Activated T-helper 2 cell treated with anti-CD3 and anti-CD28 coated beads, Interferon-gamma antibody, Interleukin-2, Interleukin-4, amounts not matched to agents 10 μg/mL and 5 μg/mL and 100 μg/mL, durations not matched to agents 14 hours and 24 hours and 36 hours (primary cell): ENCODE measurements at regions of chr12 and their contacts with region 1.

Region 1: DNA sequence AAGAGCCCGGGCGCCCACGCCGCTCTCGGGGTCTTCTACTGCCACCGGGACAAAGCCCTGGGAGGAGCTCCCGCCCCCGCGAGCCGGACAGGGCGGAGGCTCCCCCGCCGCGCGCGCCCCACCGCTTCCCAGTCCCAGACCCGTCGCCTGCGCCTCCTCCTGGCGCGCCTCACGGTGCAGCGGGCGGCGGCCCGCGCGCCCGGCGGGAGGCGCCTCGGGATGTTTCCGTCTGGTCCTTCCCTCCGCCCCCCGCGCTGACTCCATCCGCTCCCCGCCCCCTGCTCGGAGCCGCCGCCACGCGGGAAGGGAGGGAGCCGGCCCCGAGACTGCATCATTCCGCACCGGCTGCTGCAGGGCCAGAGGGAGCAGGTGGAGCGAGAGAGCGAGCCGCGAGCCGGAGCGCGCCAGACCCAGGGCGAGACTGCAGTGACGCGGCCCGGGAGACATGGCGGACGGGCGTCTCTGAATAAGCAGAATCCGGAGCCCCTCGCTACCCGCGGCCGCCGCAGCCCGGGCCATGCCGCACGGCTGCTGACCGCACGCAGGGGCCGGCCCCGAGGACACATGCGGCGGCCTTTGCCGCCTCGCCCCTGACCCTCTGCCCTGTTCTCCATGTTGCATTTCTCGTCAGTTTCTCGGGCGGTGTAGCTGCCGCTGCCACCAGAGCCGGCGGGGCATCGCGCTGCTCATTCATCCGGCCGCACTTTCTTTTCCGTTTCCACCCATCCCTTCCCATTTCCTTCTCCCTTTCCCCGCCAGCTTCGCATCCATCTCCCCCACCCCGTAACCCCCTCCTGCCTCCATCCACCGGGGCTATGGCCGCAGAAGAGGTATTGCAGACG is at the start of gene BICD1:
- DNase-seq: peak; percentile 65
- H3K4me3 Mint-ChIP-seq: peak within 1 kb of the TSS; percentile 91
- H3K27ac Mint-ChIP-seq: peak within 1 kb of the TSS; percentile 81
- H3K4me1 Mint-ChIP-seq: peaks cover 26% of the 10 kb centered on the region
- H3K27me3 Mint-ChIP-seq: peaks cover 16% of the 10 kb centered on the region
- total RNA-seq, gene BICD1: 8.0 and 8.8 TPM in 2 replicates

Region 2: GRCh38 chr12:31651893-31652521 is 454.7 kb before region 1 on chr12:
- intact Hi-C with region 1: loop called (anchors 2 kb)
- DNase-seq: no peak
- H3K4me3 Mint-ChIP-seq: no peak overlapping the region
- H3K27ac Mint-ChIP-seq: no peak overlapping the region
- H3K4me1 Mint-ChIP-seq: peaks cover 11% of the 10 kb centered on the region
- H3K27me3 Mint-ChIP-seq: peaks cover 4% of the 10 kb centered on the region

Region 3: GRCh38 chr12:32120419-32120818 is 13.7 kb after region 1 on chr12:
- intact Hi-C with region 1: loop called (anchors 1 kb)
- DNase-seq: no peak
- H3K4me3 Mint-ChIP-seq: no peak overlapping the region
- H3K27ac Mint-ChIP-seq: no peak overlapping the region
- H3K4me1 Mint-ChIP-seq: peaks cover 10% of the 10 kb centered on the region
- H3K27me3 Mint-ChIP-seq: peaks cover 25% of the 10 kb centered on the region

Region 4: GRCh38 chr12:32501835-32502333 is 395.1 kb after region 1 on chr12:
- intact Hi-C with region 1: no loop called
- DNase-seq: no peak
- H3K4me3 Mint-ChIP-seq: no peak overlapping the region
- H3K27ac Mint-ChIP-seq: peak overlapping the region; percentile 8
- H3K4me1 Mint-ChIP-seq: peaks cover 7% of the 10 kb centered on the region
- H3K27me3 Mint-ChIP-seq: peaks cover 5% of the 10 kb centered on the region